ENCODE measurements at regions of chr9 and their contacts with region 1.

Region 1: DNA sequence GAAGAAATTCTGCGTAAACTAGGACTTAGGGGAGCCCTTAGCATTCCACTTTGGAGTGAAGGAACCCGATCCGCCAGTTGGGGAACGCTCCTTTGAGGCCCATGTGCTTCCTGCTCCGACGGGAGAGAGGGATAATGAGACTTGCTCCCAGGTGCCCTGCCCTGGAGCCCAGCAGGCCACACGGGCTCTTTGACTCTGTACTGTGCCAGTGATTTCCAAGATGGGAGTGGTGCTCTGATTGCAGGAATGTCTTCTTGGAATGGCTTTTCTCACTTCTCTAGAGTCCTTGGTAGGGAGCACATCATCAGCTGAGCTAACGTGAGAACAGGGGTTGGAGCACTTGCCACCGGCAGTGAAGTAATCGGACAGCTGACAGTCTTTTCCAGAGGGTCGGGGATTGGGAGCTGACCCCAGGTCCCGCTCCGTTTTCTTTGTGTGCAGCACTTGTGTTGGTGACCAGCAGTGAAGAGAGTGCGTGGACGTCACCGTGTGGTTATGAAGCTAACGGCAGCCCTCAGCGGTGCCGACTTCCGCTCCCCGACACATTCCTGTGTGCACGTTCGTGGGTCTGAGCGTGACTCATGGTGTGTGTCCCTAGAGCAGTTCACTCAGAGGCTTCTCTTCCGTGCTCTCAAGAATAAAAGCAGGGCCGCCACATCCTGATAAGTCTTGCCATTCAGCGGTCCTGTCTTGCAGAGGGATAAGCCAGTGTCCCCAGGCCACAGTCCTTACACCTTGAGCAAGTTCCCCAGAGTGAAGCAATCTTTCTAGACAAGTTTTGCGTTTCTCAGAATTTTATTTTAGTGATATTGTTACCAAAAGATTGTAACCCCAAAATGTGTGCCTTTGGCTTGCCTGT is 25.6 kb downstream of the ABL1 start:
- DNase-seq: peak; percentile 88
- ATAC-seq: peak; percentile 94

Region 2: GRCh38 chr9:130707225-130707976 is 153.3 kb before region 1 on chr9:
- intact Hi-C with region 1: loop called (anchors 1 kb)
- DNase-seq: no peak
- ATAC-seq: no peak

Region 3: DNA sequence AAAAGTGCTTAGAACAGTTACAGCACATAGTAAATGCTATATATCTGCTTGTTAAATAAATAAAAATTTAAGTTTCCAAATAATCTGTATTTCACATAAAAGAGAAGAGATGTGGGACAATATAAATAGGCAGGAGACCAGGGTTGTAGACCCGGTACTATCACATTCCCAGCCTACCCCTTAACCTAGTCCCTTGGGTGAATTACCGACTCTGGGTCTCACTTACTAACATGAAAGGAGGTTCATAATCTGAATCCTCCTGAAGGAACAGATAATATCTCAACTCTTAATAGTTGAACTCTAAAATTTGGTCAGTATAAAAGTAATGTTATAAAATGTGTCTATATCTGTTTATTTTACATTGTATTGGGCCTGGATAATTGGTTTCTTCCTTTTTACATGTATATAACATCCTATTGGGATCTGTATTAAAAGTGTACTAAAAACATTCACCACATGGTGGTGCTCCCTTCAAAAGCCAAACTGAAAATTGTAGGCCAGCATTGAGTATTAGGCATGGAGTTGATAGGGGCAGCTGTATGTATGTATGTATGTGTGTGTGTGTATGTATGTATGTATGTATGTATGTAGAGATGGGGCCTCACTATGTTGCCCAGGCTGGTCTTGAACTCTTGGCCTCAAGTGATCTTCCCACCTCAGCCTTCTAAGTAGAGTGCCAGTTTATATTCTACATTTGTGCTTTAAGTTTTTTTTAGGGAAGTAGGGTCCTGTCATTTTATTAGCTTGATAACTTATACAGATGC is 89.8 kb before region 1 on chr9:
- intact Hi-C with region 1: loop called (anchors 1 kb)
- DNase-seq: no peak
- ATAC-seq: peak; percentile 54

Region 4: GRCh38 chr9:130834371-130835311 is 26.0 kb before region 1 on chr9 and contains the start of gene ABL1:
- intact Hi-C with region 1: loop called (anchors 2 kb)
- DNase-seq: peak; percentile 81
- ATAC-seq: peak; percentile 89
- total RNA-seq, gene ABL1: 33.0 TPM

Measured in Right ventricle myocardium inferior (tissue), 1 donor.